ENCODE measurements at regions of chr17 and their contacts with region 1.

Region 1: DNA sequence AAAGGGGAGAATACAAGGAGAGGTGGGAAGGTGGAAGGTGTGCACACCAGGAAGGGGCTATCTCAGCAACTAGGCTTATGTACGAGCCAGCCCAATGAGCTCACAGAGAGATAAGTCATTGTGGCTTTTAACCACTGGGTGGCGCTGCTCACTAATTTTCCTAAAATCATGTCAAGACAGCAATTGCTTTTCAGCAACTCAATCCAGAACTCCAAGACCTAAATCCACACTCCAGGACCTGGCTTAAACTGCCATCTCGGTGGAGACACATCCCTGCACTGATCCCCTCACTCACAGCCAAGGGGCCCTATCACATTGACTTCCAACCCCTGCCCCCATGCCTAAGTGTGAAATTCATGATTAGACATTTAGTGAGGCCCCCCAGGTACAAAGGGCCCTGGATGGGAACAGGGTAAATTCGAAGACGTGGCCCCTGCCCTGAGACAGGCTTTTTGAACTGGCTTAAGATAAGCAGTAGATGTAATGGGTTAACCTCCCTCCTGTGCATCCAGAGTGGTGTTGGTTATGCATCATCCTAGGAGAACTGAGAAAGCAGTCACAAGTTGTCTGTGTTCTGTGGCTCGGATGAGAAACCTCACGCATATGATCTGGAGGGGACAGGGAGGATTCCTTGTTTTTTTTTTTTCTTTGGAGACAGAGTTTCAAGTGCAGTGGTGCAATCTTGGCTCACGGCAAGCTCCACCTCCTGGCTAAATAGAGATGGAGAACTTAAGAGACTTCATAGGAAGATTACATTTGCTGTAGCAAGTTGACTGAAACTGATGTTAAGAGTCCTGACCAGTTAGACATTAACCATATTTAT is 11.5 kb downstream of the CCL16 start:
- DNase-seq: peak; percentile 9
- H3K4me3 ChIP-seq: no peak overlapping the region
- H3K27ac ChIP-seq: no peak overlapping the region
- H3K4me1 ChIP-seq: peaks cover 0 to 13% (median 6%) of the 10 kb centered on the region in 3 donors
- H3K27me3 ChIP-seq: peaks cover 0 to 6% (median 0%) of the 10 kb centered on the region in 4 donors
- CTCF ChIP-seq: peak; percentile 72 to 80 (median 78)
- POLR2A ChIP-seq: no peak

Region 2: GRCh38 chr17:35816723-35817122 is 153.0 kb before region 1 on chr17:
- intact Hi-C with region 1: no loop called
- DNase-seq: no peak
- H3K4me3 ChIP-seq: no peak overlapping the region
- H3K27ac ChIP-seq: no peak overlapping the region
- H3K4me1 ChIP-seq: peaks cover 3 to 54% (median 8%) of the 10 kb centered on the region in 3 donors
- H3K27me3 ChIP-seq: no peaks in the 10 kb centered on the region
- CTCF ChIP-seq: no peak
- POLR2A ChIP-seq: no peak

Region 3: GRCh38 chr17:35898283-35899070 is 71.3 kb before region 1 on chr17:
- intact Hi-C with region 1: no loop called
- DNase-seq: no peak
- H3K4me3 ChIP-seq: no peak overlapping the region
- H3K27ac ChIP-seq: no peak overlapping the region
- H3K4me1 ChIP-seq: peaks cover 0 to 15% (median 5%) of the 10 kb centered on the region in 3 donors
- H3K27me3 ChIP-seq: peaks cover 0 to 4% (median 0%) of the 10 kb centered on the region in 4 donors
- CTCF ChIP-seq: no peak
- POLR2A ChIP-seq: no peak

Region 4: GRCh38 chr17:36148559-36149295 is 179.0 kb after region 1 on chr17:
- intact Hi-C with region 1: loop called (anchors 10 kb)
- DNase-seq: no peak
- H3K4me3 ChIP-seq: peak overlapping the region in 1 of 4 donors; percentile 30
- H3K27ac ChIP-seq: no peak overlapping the region
- H3K4me1 ChIP-seq: peaks cover 0 to 11% (median 3%) of the 10 kb centered on the region in 3 donors
- H3K27me3 ChIP-seq: peaks cover 0 to 40% (median 0%) of the 10 kb centered on the region in 4 donors
- CTCF ChIP-seq: peak; percentile 84 to 99 (median 92)
- POLR2A ChIP-seq: no peak

Region 5: DNA sequence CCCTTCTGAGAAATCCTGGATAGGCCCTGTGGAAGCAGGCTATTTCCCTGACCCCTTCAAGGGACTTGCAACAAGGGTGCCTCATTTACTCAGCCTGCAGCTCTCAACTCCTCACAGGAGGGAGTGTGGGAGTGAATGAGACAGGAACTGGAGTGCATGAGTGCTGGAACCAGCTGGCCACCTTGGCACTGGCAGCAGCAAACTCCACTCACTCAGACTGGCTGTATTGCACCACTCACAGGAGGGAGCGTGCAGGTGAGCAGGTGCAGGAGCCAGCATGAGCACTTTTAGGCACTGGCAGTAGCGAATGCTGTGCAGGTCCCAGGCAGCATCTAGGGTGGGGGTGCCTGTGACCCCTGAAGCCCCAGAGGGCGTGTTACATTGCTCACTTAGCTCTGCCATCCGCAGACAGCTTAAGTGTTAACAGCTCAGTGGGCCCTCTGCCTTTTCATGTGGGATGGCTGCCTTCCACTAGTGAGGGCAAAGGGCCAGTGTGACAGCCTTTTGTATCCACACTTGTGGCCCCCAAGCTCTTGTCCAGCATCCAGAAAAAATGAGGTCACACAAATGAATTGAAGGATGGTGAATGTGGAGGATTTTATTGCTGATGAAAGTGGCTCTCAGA is 505.7 kb after region 1 on chr17:
- intact Hi-C with region 1: loop called (anchors 10 kb)
- DNase-seq: no peak
- H3K4me3 ChIP-seq: no peak overlapping the region
- H3K27ac ChIP-seq: no peak overlapping the region
- H3K4me1 ChIP-seq: no peaks in the 10 kb centered on the region
- H3K27me3 ChIP-seq: peaks cover 0 to 47% (median 0%) of the 10 kb centered on the region in 4 donors
- CTCF ChIP-seq: no peak
- POLR2A ChIP-seq: no peak